B cell (primary cell): ENCODE measurements at regions of chr11 and their contacts with region 1.

Region 1: GRCh38 chr11:20647976-20648565 is 21.3 kb upstream of the NELL1 start:
- DNase-seq: peak; percentile 46
- ATAC-seq: peak; percentile 39
- H3K4me3 ChIP-seq: no peak overlapping the region
- H3K4me3 Mint-ChIP-seq: no peak overlapping the region
- H3K27ac ChIP-seq: no peak overlapping the region
- H3K27ac Mint-ChIP-seq: no peak overlapping the region
- H3K4me1 ChIP-seq: no peaks in the 10 kb centered on the region
- H3K4me1 Mint-ChIP-seq: no peaks in the 10 kb centered on the region
- H3K27me3 ChIP-seq: peaks cover 0 to 2% (median 0%) of the 10 kb centered on the region in 4 experiments
- H3K27me3 Mint-ChIP-seq: peaks cover 12% of the 10 kb centered on the region
- CTCF ChIP-seq: peak; percentile 92

Region 2: DNA sequence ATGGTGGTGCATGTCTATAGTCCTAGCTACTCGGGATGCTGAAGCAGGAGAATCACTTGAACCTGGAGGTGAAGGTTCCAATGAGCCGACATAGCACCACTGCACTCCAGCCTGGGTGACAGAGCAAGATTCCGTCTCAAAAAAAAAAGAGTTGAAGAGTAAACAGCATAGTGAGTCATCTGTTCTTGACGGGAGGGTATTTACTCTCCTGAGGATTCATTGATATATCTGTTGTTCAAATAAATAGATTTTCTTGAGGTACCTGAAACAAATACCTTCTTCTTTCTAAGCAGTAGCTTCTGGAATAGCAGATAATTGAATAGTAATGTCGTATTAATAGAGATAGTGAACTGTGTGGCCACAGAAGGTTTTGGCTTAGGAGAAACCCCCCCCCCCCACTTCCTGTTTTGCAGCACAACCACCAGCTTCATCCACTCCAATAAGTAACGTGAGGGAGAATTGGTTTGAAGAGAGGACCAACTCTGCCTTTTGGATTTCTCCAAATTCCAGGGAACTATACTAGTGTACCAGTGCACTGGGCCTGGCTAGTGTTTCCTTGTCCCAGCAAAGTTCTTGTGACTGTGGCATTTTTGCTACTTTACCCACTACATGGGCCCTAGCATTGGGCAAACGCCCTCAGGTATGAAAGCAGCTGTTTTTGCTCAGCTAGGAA is 170.5 kb before region 1 on chr11:
- CTCF ChIA-PET with region 1: no interaction called
- POLR2A ChIA-PET with region 1: no interaction called
- intact Hi-C with region 1: no loop called
- DNase-seq: no peak
- ATAC-seq: no peak
- H3K4me3 ChIP-seq: no peak overlapping the region
- H3K4me3 Mint-ChIP-seq: no peak overlapping the region
- H3K27ac ChIP-seq: no peak overlapping the region
- H3K27ac Mint-ChIP-seq: no peak overlapping the region
- H3K4me1 ChIP-seq: peaks cover 12 to 25% of the 10 kb centered on the region in 2 donors
- H3K4me1 Mint-ChIP-seq: peaks cover 24% of the 10 kb centered on the region
- H3K27me3 ChIP-seq: no peaks in the 10 kb centered on the region
- H3K27me3 Mint-ChIP-seq: no peaks in the 10 kb centered on the region
- CTCF ChIP-seq: no peak

Region 3: GRCh38 chr11:20609727-20610707 is 38.1 kb before region 1 on chr11:
- CTCF ChIA-PET with region 1: no interaction called
- POLR2A ChIA-PET with region 1: no interaction called
- intact Hi-C with region 1: loop called (anchors 1 kb)
- DNase-seq: peak; percentile 43
- ATAC-seq: no peak
- H3K4me3 ChIP-seq: peak overlapping the region in 2 of 5 experiments; percentile 19 to 20
- H3K4me3 Mint-ChIP-seq: peak overlapping the region; percentile 45
- H3K27ac ChIP-seq: no peak overlapping the region
- H3K27ac Mint-ChIP-seq: no peak overlapping the region
- H3K4me1 ChIP-seq: peaks cover 5 to 6% of the 10 kb centered on the region in 2 donors
- H3K4me1 Mint-ChIP-seq: peaks cover 6% of the 10 kb centered on the region
- H3K27me3 ChIP-seq: peaks cover 0 to 51% (median 20%) of the 10 kb centered on the region in 4 experiments
- H3K27me3 Mint-ChIP-seq: peaks cover 68% of the 10 kb centered on the region
- CTCF ChIP-seq: peak; percentile 77

Region 4: GRCh38 chr11:20688761-20689160 is 40.7 kb after region 1 on chr11:
- CTCF ChIA-PET with region 1: no interaction called
- POLR2A ChIA-PET with region 1: no interaction called
- intact Hi-C with region 1: no loop called
- DNase-seq: no peak
- ATAC-seq: no peak
- H3K4me3 ChIP-seq: no peak overlapping the region
- H3K4me3 Mint-ChIP-seq: no peak overlapping the region
- H3K27ac ChIP-seq: no peak overlapping the region
- H3K27ac Mint-ChIP-seq: no peak overlapping the region
- H3K4me1 ChIP-seq: no peaks in the 10 kb centered on the region
- H3K4me1 Mint-ChIP-seq: no peaks in the 10 kb centered on the region
- H3K27me3 ChIP-seq: no peaks in the 10 kb centered on the region
- H3K27me3 Mint-ChIP-seq: no peaks in the 10 kb centered on the region
- CTCF ChIP-seq: no peak